Right cardiac atrium (tissue), 5 donors: ENCODE measurements at regions of chr7 and their contacts with region 1.

Region 1: GRCh38 chr7:94449148-94449725 is 54.5 kb downstream of the COL1A2 start:
- DNase-seq: no peak
- ATAC-seq: no peak
- H3K4me3 ChIP-seq: no peak overlapping the region
- H3K27ac ChIP-seq: no peak overlapping the region
- H3K4me1 ChIP-seq: no peaks in the 10 kb centered on the region
- H3K27me3 ChIP-seq: no peaks in the 10 kb centered on the region

Region 2: GRCh38 chr7:93678185-93678584 is 771.1 kb before region 1 on chr7:
- intact Hi-C with region 1: no loop called
- DNase-seq: no peak
- ATAC-seq: no peak
- H3K4me3 ChIP-seq: no peak overlapping the region
- H3K27ac ChIP-seq: no peak overlapping the region
- H3K4me1 ChIP-seq: no peaks in the 10 kb centered on the region
- H3K27me3 ChIP-seq: no peaks in the 10 kb centered on the region

Region 3: DNA sequence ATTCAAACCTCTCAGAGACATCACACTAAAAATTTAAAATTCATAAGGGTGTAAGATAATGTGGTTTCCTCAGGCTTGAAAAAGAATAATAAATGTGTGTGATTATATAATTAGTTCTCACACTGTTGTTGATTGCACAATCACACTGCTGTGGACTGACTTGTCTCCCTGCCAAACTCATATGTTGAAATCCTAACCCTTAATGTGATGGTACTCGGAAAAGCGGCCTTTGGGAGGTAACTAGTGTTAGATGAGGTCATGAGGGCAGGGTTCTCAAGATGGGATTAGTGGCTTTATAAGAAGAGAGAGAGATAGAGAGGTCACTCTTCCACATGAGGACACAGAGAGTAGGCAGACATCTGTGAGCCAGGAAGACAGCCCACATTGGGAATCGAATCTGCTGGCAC is 183.0 kb before region 1 on chr7:
- intact Hi-C with region 1: no loop called
- DNase-seq: peak in 1 of 3 donors; percentile 34
- ATAC-seq: peak; percentile 92 to 93
- H3K4me3 ChIP-seq: no peak overlapping the region
- H3K27ac ChIP-seq: no peak overlapping the region
- H3K4me1 ChIP-seq: no peaks in the 10 kb centered on the region
- H3K27me3 ChIP-seq: no peaks in the 10 kb centered on the region

Region 4: GRCh38 chr7:94509879-94510581 is 60.8 kb after region 1 on chr7:
- intact Hi-C with region 1: loop called in 1 of 4 experiments (anchors 10 kb)
- DNase-seq: peak; percentile 66 to 88 (median 85)
- ATAC-seq: peak; percentile 91 to 93
- H3K4me3 ChIP-seq: peak overlapping the region; percentile 71
- H3K27ac ChIP-seq: peak overlapping the region; percentile 75
- H3K4me1 ChIP-seq: peaks cover 4% of the 10 kb centered on the region
- H3K27me3 ChIP-seq: no peaks in the 10 kb centered on the region

Region 5: GRCh38 chr7:95246831-95247370 is 797.7 kb after region 1 on chr7:
- intact Hi-C with region 1: loop called in 1 of 4 experiments (anchors 5 kb)
- DNase-seq: peak in 2 of 3 donors; percentile 7 to 22
- ATAC-seq: peak; percentile 79 to 89
- H3K4me3 ChIP-seq: no peak overlapping the region
- H3K27ac ChIP-seq: no peak overlapping the region
- H3K4me1 ChIP-seq: no peaks in the 10 kb centered on the region
- H3K27me3 ChIP-seq: no peaks in the 10 kb centered on the region

Region 6: GRCh38 chr7:95479992-95480624 is 1030.9 kb after region 1 on chr7:
- intact Hi-C with region 1: loop called in 1 of 4 experiments (anchors 10 kb)
- DNase-seq: no peak
- ATAC-seq: no peak
- H3K4me3 ChIP-seq: no peak overlapping the region
- H3K27ac ChIP-seq: no peak overlapping the region
- H3K4me1 ChIP-seq: no peaks in the 10 kb centered on the region
- H3K27me3 ChIP-seq: no peaks in the 10 kb centered on the region